Endothelial cell of umbilical vein (primary cell): ENCODE measurements at regions of chr6 and their contacts with region 1.

Region 1: DNA sequence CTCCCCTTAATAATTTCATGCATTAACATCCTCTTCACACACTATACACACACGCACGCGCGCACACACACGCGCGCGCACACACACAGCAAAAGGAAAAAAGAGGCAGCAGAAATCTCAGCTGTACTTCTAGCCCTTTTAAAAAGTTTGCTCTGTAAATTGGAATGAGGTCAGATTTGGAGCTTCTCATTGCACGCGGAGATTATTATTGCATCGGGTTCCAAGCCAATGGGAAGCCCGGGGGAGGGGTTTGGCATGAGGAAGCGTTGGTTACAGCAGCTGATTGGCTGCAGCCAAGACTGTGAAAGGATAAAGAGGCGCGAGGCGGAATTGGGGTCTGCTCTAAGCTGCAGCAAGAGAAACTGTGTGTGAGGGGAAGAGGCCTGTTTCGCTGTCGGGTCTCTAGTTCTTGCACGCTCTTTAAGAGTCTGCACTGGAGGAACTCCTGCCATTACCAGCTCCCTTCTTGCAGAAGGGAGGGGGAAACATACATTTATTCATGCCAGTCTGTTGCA is at the start of gene SOX4:
- DNase-seq: peak; percentile 99
- H3K4me3 ChIP-seq: peak within 1 kb of the TSS; percentile 85 to 98 (median 96)
- H3K27ac ChIP-seq: peak within 1 kb of the TSS; percentile 94
- H3K4me1 ChIP-seq: peaks cover 14% of the 10 kb centered on the region
- H3K27me3 ChIP-seq: no peaks in the 10 kb centered on the region
- CTCF ChIP-seq: no peak
- POLR2A ChIP-seq: peak; percentile 100
- total RNA-seq, gene SOX4: 121 and 127 TPM in 2 replicates

Region 2: GRCh38 chr6:20652299-20653084 is 941.0 kb before region 1 on chr6:
- CTCF ChIA-PET with region 1: no interaction called
- POLR2A ChIA-PET with region 1: interaction called, 3 read pairs
- dilution Hi-C with region 1: no loop called
- intact Hi-C with region 1: loop called (anchors 5 kb)
- DNase-seq: peak; percentile 69
- H3K4me3 ChIP-seq: no peak overlapping the region
- H3K27ac ChIP-seq: peak overlapping the region; percentile 70
- H3K4me1 ChIP-seq: peaks cover 22% of the 10 kb centered on the region
- H3K27me3 ChIP-seq: no peaks in the 10 kb centered on the region
- CTCF ChIP-seq: no peak
- POLR2A ChIP-seq: no peak

Region 3: DNA sequence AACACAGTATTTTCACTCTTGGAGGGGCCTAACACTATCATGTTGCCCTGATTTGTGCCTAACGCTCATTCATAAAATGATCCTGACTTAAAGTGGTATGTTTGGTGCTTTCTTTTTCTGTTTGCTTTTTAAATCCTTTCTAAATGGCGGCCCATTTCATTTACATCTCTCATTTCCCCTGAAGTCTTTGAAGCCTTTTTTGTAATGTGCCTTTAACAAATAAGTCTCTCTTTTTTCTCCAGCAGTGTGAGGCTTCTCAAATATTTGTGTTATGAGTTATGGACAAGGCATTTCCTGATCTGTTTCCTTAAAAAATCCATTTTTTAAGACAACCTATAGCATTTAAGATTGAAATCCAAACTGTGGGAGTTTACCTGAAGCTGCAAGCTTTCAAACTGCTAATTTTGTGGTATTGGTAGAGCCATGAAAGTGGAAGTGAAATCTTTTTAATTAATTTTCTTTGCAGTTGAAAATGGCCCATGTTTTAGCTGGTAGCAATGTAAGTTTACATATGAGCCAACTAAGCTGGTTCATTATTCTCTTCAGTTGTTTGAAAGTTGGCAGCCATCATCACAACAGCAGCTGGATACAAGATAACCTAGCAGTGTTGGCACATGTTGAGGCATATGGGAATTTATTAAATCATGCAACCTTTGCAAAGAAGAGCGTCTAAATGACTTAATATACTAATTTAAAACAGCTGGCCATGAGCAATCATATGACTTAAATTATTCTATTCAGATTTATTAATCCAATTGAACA is 589.5 kb before region 1 on chr6:
- CTCF ChIA-PET with region 1: interaction called, 6 read pairs
- POLR2A ChIA-PET with region 1: interaction called, 11 read pairs
- dilution Hi-C with region 1: no loop called
- intact Hi-C with region 1: loop called (anchors 1 kb)
- DNase-seq: peak; percentile 93
- H3K4me3 ChIP-seq: peak overlapping the region in 1 of 3 experiments; percentile 29
- H3K27ac ChIP-seq: peak overlapping the region; percentile 96
- H3K4me1 ChIP-seq: peaks cover 34% of the 10 kb centered on the region
- H3K27me3 ChIP-seq: no peaks in the 10 kb centered on the region
- CTCF ChIP-seq: no peak
- POLR2A ChIP-seq: no peak

Region 4: GRCh38 chr6:21476112-21476511 is 117.4 kb before region 1 on chr6:
- CTCF ChIA-PET with region 1: no interaction called
- POLR2A ChIA-PET with region 1: no interaction called
- dilution Hi-C with region 1: no loop called
- intact Hi-C with region 1: no loop called
- DNase-seq: no peak
- H3K4me3 ChIP-seq: no peak overlapping the region
- H3K27ac ChIP-seq: no peak overlapping the region
- H3K4me1 ChIP-seq: peaks cover 3% of the 10 kb centered on the region
- H3K27me3 ChIP-seq: peaks cover 0 to 5% of the 10 kb centered on the region in 2 experiments
- CTCF ChIP-seq: no peak
- POLR2A ChIP-seq: no peak

Region 5: DNA sequence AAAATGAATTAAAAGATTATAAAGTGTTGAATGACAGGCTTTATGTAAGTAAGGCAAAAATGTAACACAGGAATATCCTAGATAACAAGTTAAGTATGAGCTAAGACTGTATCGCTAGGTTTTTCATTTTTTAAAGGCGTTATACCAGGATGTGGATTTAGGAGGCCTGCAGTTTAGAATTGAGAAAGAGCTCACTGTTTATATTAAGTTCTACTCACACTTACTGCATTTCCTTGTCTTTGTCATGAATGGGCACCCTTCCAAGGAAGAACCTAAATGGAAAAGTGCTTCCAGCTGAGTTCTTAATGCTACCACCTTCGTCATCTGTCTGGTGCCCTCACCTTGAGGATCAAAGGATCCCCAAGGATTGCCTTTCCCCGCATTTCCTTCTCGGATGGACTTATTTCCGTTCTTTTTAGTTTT is 148.8 kb after region 1 on chr6:
- CTCF ChIA-PET with region 1: interaction called, 3 read pairs
- POLR2A ChIA-PET with region 1: interaction called, 11 read pairs
- dilution Hi-C with region 1: no loop called
- intact Hi-C with region 1: loop called (anchors 2 kb)
- DNase-seq: peak; percentile 89
- H3K4me3 ChIP-seq: peak overlapping the region in 1 of 3 experiments; percentile 53
- H3K27ac ChIP-seq: peak overlapping the region; percentile 95
- H3K4me1 ChIP-seq: peaks cover 37% of the 10 kb centered on the region
- H3K27me3 ChIP-seq: no peaks in the 10 kb centered on the region
- CTCF ChIP-seq: no peak
- POLR2A ChIP-seq: no peak

Region 6: GRCh38 chr6:21935561-21936028 is 342.1 kb after region 1 on chr6:
- CTCF ChIA-PET with region 1: interaction called, 3 read pairs
- POLR2A ChIA-PET with region 1: interaction called, 7 read pairs
- dilution Hi-C with region 1: no loop called
- intact Hi-C with region 1: loop called (anchors 1 kb)
- DNase-seq: no peak
- H3K4me3 ChIP-seq: no peak overlapping the region
- H3K27ac ChIP-seq: no peak overlapping the region
- H3K4me1 ChIP-seq: peaks cover 19% of the 10 kb centered on the region
- H3K27me3 ChIP-seq: no peaks in the 10 kb centered on the region
- CTCF ChIP-seq: peak; percentile 42 to 45
- POLR2A ChIP-seq: no peak

Region 7: GRCh38 chr6:22471132-22471690 is 877.7 kb after region 1 on chr6:
- CTCF ChIA-PET with region 1: interaction called, 4 read pairs
- POLR2A ChIA-PET with region 1: no interaction called
- dilution Hi-C with region 1: no loop called
- intact Hi-C with region 1: loop called (anchors 2 kb)
- DNase-seq: peak; percentile 98
- H3K4me3 ChIP-seq: no peak overlapping the region
- H3K27ac ChIP-seq: peak overlapping the region; percentile 56
- H3K4me1 ChIP-seq: peaks cover 27% of the 10 kb centered on the region
- H3K27me3 ChIP-seq: no peaks in the 10 kb centered on the region
- CTCF ChIP-seq: no peak
- POLR2A ChIP-seq: no peak